ENCODE measurements at regions of chr3 and their contacts with region 1.

Region 1: DNA sequence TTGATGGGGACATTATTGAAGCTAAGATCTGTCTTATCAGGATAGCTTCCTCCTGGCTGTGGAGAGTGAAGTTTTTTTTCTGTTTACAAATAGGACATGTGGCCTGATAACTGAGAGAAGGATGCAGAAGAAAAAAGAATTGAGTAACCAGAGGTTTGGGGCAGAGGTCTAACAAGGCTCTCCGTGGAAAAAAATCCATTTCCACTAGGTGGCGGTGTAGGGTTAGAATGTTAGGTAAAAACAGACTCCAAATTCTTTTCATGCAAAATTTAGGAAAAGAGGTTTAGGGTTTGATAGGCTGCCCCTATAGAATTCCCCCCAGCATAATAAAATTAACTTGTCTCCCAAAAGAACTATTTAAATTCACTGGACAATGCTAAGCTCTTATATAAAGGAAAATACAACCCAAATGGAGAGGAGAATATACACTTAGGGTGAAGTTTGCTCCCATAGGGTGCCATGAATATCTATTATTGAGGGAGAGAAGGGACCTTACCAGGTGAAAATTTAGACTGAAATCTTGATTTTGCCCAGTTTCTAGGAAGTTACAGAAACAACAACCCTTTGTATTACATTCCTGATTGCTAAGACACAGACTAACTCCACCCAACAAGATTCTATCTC is 1560.4 kb downstream of the OTOL1 start:
- DNase-seq: peak; percentile 36 to 56
- ATAC-seq: peak; percentile 62 to 74; a peak in 2 of 6 replicates
- H3K4me3 ChIP-seq: no peak overlapping the region
- H3K27ac ChIP-seq: no peak overlapping the region
- H3K4me1 ChIP-seq: no peaks in the 10 kb centered on the region
- CTCF ChIP-seq: peak; percentile 65
- EP300 ChIP-seq: no peak
- POLR2A ChIP-seq: no peak
- RAD21 ChIP-seq: peak; percentile 65 to 69

Region 2: GRCh38 chr3:163045945-163046344 is 11.0 kb before region 1 on chr3:
- CTCF ChIA-PET with region 1: interaction called, 22 read pairs
- POLR2A ChIA-PET with region 1: no interaction called
- DNase-seq: no peak
- ATAC-seq: no peak
- H3K4me3 ChIP-seq: no peak overlapping the region
- H3K27ac ChIP-seq: no peak overlapping the region
- H3K4me1 ChIP-seq: no peaks in the 10 kb centered on the region
- CTCF ChIP-seq: no peak
- EP300 ChIP-seq: no peak
- POLR2A ChIP-seq: no peak
- RAD21 ChIP-seq: no peak

Region 3: DNA sequence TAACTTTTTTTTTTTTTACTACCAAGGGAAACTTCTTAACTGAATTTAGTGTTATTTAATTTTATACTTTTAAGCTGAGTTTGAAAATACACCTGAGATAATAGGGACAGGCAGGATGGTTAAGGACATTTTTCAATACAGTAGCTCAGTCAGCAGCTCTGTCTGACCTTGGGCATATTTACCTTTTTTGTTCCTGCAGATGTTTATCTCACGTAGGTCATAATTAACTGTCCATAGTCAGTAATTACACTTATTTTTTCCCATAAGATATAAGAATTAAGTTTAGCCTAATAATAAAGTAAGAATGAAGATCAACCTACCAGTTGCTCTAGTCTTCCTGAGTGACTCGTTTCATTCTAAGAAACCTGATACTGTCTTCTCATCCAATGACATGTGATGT is 13.0 kb after region 1 on chr3:
- CTCF ChIA-PET with region 1: interaction called, 10 read pairs
- POLR2A ChIA-PET with region 1: no interaction called
- DNase-seq: no peak
- ATAC-seq: no peak
- H3K4me3 ChIP-seq: no peak overlapping the region
- H3K27ac ChIP-seq: no peak overlapping the region
- H3K4me1 ChIP-seq: no peaks in the 10 kb centered on the region
- CTCF ChIP-seq: no peak
- EP300 ChIP-seq: no peak
- POLR2A ChIP-seq: no peak
- RAD21 ChIP-seq: no peak

Measured in A549 (cell line).